IMR-90 (cell line): ENCODE measurements at regions of chr9 and their contacts with region 1.

Region 1: DNA sequence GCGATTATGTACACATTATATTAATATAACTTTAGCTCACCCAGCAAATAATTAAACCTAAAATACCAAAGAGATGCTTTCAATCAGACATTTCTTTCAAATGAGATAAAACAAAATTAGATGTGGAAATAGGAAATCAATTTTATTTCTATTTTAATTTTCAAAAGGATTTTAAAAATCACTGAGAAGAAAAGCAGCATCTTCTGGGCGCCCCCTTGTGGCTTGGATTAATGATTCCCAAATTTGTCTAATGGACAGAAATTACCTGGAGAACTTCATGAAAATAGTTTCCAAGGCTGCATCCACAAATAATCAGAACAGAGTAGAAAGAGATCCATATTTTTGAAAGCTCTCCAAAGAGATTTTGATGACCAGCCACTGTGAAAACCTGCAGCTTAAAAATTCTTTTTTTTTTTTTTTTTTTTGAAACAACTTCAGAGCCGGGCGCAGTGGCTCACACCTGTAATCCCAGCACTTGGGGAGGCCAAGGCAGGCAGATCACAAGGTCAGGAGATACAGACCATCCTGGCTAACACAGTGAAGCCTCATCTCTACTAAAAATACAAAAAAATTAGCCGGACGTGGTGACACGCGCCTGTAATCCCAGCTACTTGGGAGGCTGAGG is 50.9 kb upstream of the CEMIP2 start:
- DNase-seq: peak; percentile 39
- ATAC-seq: no peak
- H3K4me3 ChIP-seq: no peak overlapping the region
- H3K27ac ChIP-seq: no peak overlapping the region
- H3K4me1 ChIP-seq: no peaks in the 10 kb centered on the region
- H3K27me3 ChIP-seq: no peaks in the 10 kb centered on the region; the same call in none of the 2 replicates
- CTCF ChIP-seq: peak; percentile 81
- POLR2A ChIP-seq: no peak
- RAD21 ChIP-seq: peak; percentile 64

Region 2: DNA sequence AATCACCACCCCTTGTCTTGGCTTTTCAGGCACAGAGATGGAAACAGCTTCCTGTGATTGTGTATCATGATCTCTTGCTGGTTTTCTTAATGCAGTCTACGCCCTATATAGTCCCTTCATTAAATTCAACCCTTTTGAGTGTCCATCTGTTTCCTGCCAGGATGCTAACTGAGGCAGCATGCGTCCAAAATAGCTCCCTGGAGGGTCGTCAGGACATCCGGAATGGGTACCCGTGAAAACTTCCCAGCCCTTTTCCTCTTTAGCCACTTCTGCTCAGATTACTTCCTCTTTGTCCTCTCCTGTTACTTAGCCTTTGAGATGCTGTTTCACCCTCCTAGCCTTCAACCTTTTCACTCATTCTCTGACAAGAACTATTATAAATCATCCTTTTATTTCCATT is 1325.0 kb before region 1 on chr9:
- CTCF ChIA-PET with region 1: no interaction called
- POLR2A ChIA-PET with region 1: no interaction called
- dilution Hi-C with region 1: no loop called
- in situ Hi-C with region 1: no loop called
- intact Hi-C with region 1: no loop called
- DNase-seq: no peak
- ATAC-seq: no peak
- H3K4me3 ChIP-seq: no peak overlapping the region
- H3K27ac ChIP-seq: no peak overlapping the region
- H3K4me1 ChIP-seq: 0 out of 2 replicates have a peak, but pooled peaks cover 2% of the 10 kb centered on the region
- H3K27me3 ChIP-seq: no peaks in the 10 kb centered on the region
- CTCF ChIP-seq: no peak
- POLR2A ChIP-seq: no peak
- RAD21 ChIP-seq: no peak

Region 3: DNA sequence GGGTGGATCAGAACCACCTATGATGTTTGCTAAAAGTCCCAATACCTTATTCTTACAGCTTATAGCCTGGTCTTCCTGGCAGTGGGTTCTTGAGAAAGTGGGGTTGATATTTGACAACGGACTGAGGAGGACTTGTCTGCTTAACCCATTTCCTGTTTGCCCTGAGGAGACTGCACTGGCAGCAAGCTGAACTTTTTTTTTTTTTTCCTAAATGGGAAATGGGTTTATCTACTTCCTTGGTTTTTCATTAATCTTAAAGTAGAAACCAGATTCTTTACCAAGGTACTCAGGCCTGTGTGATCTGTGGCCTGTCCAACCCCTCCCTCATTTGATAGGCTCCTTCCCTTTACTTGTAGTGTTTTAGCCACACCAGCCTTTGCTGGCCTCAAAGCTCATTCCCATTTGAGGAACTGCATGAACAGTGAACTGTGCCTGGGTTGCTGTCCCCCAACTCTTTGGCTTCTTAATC is 194.1 kb after region 1 on chr9:
- CTCF ChIA-PET with region 1: interaction called, 5 read pairs
- POLR2A ChIA-PET with region 1: no interaction called
- dilution Hi-C with region 1: no loop called
- in situ Hi-C with region 1: loop called (anchors 10 kb)
- intact Hi-C with region 1: no loop called
- DNase-seq: no peak
- ATAC-seq: no peak
- H3K4me3 ChIP-seq: no peak overlapping the region
- H3K27ac ChIP-seq: no peak overlapping the region
- H3K4me1 ChIP-seq: no peaks in the 10 kb centered on the region
- H3K27me3 ChIP-seq: peaks cover 6% of the 10 kb centered on the region
- CTCF ChIP-seq: no peak
- POLR2A ChIP-seq: no peak
- RAD21 ChIP-seq: no peak